OCI-LY7 (cell line): ENCODE measurements at regions of chr11 and their contacts with region 1.

Region 1: DNA sequence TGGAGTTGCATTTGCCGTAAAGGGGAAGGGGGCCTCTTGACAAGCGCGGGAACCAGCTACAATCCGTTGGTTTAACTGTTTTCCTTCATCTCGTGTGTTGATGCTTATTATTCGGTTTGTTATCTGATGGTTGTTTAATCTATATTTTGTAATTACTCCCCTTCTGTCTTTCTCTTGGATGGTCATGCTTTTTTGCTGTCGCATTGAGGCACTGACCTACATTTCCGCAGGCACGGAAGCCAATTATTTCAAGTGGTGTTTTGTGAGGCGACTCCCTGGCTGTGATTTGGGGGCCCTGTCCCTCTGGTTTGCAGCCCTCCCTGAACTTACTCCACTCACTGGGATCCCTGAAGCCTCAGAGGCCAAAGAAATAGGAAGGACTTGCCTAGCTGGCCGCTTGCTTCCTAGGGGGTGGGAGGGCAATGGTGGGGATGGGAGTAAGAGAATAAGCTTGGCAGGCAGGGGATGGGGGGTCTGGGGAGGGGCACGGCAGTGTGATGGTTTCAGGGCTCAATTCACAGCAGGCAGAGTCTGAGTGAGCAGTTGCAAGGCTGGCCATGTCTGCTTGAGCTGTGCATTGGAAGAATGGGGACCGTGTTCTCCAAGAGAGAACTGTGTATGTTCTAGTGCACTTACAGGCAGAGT is 165.8 kb upstream of the B3GAT1 start:
- DNase-seq: no peak
- H3K4me3 ChIP-seq: no peak overlapping the region
- H3K27ac ChIP-seq: no peak overlapping the region
- H3K4me1 ChIP-seq: no peaks in the 10 kb centered on the region
- CTCF ChIP-seq: no peak

Region 2: DNA sequence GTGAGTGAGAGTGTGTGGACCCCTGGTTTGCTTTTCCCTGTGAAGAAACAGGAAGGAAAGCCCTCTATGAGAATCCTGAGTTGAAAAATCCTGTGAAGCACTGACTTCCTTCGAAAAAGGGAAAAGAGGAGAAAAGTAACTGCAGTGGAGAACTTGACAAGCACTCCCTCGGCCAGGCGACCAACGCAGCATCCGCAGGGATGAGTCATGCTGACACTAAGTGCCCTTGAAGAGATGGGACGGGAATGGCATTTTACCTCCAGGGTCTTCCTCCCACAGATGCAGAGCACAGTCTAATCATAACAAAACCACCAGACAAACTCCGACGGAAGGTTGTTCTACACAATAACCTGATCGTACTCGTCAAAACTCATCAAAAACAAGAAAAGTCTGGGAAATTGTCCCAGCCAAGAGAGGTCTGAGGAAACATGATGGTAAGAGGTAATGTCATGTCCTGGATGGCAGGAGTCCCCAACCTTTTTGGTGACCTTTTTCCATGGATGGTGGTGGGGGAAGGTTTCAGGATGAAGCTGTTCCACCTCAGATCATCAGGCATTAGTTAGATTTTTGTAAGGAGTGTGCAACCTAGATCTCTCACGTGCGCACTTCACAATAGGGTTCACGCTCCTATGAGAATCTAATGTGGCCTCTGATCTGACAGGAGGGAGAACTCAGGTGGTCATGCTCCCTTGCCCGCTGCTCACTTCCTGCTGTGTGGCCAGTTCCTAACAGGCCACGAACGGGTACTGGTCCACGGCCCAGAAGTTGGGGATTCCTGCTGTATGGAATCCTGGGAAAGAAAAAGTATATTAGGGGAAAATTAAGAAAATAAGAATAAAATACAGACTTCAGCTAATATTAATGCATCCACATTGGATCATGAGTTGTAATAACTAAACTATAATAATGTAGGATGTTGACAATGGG is 33.5 kb before region 1 on chr11:
- CTCF ChIA-PET with region 1: interaction called, 11 read pairs
- POLR2A ChIA-PET with region 1: no interaction called
- intact Hi-C with region 1: no loop called
- DNase-seq: no peak
- H3K4me3 ChIP-seq: no peak overlapping the region
- H3K27ac ChIP-seq: no peak overlapping the region
- H3K4me1 ChIP-seq: no peaks in the 10 kb centered on the region
- CTCF ChIP-seq: no peak

Region 3: GRCh38 chr11:134639586-134640358 is 61.9 kb after region 1 on chr11:
- CTCF ChIA-PET with region 1: no interaction called
- POLR2A ChIA-PET with region 1: no interaction called
- intact Hi-C with region 1: no loop called
- DNase-seq: no peak
- H3K4me3 ChIP-seq: no peak overlapping the region
- H3K27ac ChIP-seq: no peak overlapping the region
- H3K4me1 ChIP-seq: no peaks in the 10 kb centered on the region
- CTCF ChIP-seq: no peak